ENCODE measurements at regions of chr7 and their contacts with region 1.

Region 1: GRCh38 chr7:20172736-20173334 is 44.3 kb downstream of the MACC1 start:
- DNase-seq: peak; percentile 78 to 82
- H3K4me3 ChIP-seq: no peak overlapping the region
- H3K4me3 Mint-ChIP-seq: no peak overlapping the region
- H3K27ac Mint-ChIP-seq: no peak overlapping the region
- H3K4me1 ChIP-seq: peaks cover 6% of the 10 kb centered on the region
- H3K4me1 Mint-ChIP-seq: peaks cover 21% of the 10 kb centered on the region
- H3K27me3 ChIP-seq: no peaks in the 10 kb centered on the region
- H3K27me3 Mint-ChIP-seq: no peaks in the 10 kb centered on the region
- CTCF ChIP-seq: peak; percentile 69 to 88

Region 2: GRCh38 chr7:19713676-19714075 is 459.2 kb before region 1 on chr7:
- CTCF ChIA-PET with region 1: interaction called, 11 read pairs
- POLR2A ChIA-PET with region 1: no interaction called
- intact Hi-C with region 1: no loop called
- DNase-seq: peak in 1 of 2 experiments; percentile 55
- H3K4me3 ChIP-seq: no peak overlapping the region
- H3K4me3 Mint-ChIP-seq: no peak overlapping the region
- H3K27ac Mint-ChIP-seq: no peak overlapping the region
- H3K4me1 ChIP-seq: peaks cover 7% of the 10 kb centered on the region; the same call in 1 of the 2 replicates
- H3K4me1 Mint-ChIP-seq: peaks cover 14% of the 10 kb centered on the region
- H3K27me3 ChIP-seq: no peaks in the 10 kb centered on the region
- H3K27me3 Mint-ChIP-seq: no peaks in the 10 kb centered on the region
- CTCF ChIP-seq: peak; percentile 59 to 61

Region 3: DNA sequence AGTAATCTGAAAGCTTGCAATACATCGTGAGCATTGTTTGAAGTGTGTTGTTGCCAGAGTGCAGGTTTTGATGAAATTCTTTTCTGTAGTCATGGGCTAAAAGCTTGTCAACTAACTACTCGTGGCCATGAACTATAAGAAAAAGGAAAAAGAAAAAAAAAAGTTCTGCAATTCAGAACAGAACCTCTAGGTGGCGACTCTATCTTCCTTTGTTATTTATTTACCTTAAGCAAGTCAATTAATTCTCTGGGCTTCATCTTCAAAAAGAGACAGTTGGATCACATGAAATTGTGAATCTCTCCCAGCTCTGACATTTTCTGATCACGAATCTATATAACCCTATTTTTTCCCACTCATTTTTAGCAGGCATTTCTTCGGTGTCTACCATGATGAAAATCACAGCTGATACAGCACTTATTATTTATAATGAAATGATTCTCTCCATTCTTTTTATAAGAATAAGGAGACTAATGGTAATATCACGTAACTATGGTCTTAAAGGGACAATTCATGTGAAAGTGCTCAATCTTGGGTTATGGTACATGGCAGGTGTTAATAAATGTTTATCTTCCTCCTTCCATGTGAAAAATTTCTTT is 418.2 kb before region 1 on chr7:
- CTCF ChIA-PET with region 1: interaction called, 5 read pairs
- POLR2A ChIA-PET with region 1: no interaction called
- intact Hi-C with region 1: loop called (anchors 1 kb)
- DNase-seq: peak in 1 of 2 experiments; percentile 52
- H3K4me3 ChIP-seq: no peak overlapping the region
- H3K4me3 Mint-ChIP-seq: no peak overlapping the region
- H3K27ac Mint-ChIP-seq: no peak overlapping the region
- H3K4me1 ChIP-seq: peaks cover 8% of the 10 kb centered on the region; the same call in 1 of the 2 replicates
- H3K4me1 Mint-ChIP-seq: peaks cover 6% of the 10 kb centered on the region
- H3K27me3 ChIP-seq: no peaks in the 10 kb centered on the region
- H3K27me3 Mint-ChIP-seq: no peaks in the 10 kb centered on the region
- CTCF ChIP-seq: peak; percentile 65 to 78

Region 4: GRCh38 chr7:20132631-20133030 is 40.2 kb before region 1 on chr7:
- CTCF ChIA-PET with region 1: no interaction called
- POLR2A ChIA-PET with region 1: no interaction called
- intact Hi-C with region 1: no loop called
- DNase-seq: no peak
- H3K4me3 ChIP-seq: no peak overlapping the region
- H3K4me3 Mint-ChIP-seq: no peak overlapping the region
- H3K27ac Mint-ChIP-seq: peak overlapping the region; percentile 29
- H3K4me1 ChIP-seq: peaks cover 13% of the 10 kb centered on the region
- H3K4me1 Mint-ChIP-seq: peaks cover 15% of the 10 kb centered on the region
- H3K27me3 ChIP-seq: no peaks in the 10 kb centered on the region
- H3K27me3 Mint-ChIP-seq: no peaks in the 10 kb centered on the region
- CTCF ChIP-seq: no peak